HepG2 (cell line): ENCODE measurements at regions of chr6 and their contacts with region 1.

Region 1: DNA sequence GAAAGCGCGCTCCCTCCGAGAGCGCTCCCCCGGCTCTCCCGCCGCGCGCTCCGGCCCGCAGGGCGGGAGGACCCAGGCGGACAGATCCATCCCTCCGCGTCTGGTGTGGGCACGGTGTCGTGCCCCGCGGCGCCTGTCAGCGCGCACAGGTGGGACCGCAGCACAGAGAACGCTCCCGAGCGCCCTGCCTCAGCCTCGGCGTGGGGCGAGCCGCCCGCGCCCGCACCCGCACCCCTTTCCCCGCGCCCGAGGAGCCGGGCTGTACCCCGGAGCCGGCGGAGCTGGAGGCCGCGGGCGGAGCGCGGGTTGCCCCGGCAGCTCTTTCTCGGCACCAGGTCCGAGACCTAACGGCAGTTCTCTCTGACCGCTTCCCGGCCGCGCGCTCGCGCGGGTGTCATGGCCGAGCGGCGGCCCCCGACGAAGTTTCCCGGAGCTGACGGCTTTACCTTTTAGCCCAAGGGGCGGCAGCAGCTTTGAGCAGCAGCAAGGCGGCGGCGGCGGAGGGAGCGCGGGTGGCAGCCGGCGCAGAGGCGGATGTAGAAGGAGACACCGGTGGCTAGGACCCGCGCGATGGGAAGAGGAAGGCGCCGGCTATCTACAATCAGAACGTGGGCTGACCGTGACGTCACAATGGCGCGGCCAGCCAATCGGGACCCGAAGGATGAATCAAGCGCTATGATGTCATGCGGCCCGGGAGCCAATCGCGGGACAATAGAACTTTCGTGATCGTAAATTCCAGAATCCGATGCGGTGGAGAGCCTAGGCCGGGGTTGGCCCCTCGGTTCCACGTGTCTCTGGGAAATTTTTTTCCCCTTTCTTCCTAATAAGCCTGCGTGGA is at the start of gene ELOVL5:
- DNase-seq: peak; percentile 81
- ATAC-seq: peak; percentile 84
- H3K4me3 ChIP-seq: peak within 1 kb of the TSS; percentile 69 to 91 (median 91)
- H3K27ac ChIP-seq: peak within 1 kb of the TSS; percentile 66
- H3K4me1 ChIP-seq: peaks cover 23% of the 10 kb centered on the region
- H3K27me3 ChIP-seq: peaks cover 0 to 29% of the 10 kb centered on the region in 2 experiments; a peak in 4 of 5 replicates
- CTCF ChIP-seq: no peak; the same call in 1 of the 2 replicates
- EP300 ChIP-seq: no peak
- POLR2A ChIP-seq: peak; percentile 7 to 60; a peak in 1 of 4 replicates
- RAD21 ChIP-seq: no peak; the same call in none of the 2 replicates
- total RNA-seq, gene ELOVL5: 43.9 and 72.4 TPM in 2 replicates

Region 2: GRCh38 chr6:53309059-53309900 is 39.3 kb before region 1 on chr6:
- CTCF ChIA-PET with region 1: no interaction called
- POLR2A ChIA-PET with region 1: no interaction called
- in situ Hi-C with region 1: no loop called
- intact Hi-C with region 1: loop called (anchors 2 kb)
- DNase-seq: peak; percentile 56
- ATAC-seq: peak; percentile 60
- H3K4me3 ChIP-seq: no peak overlapping the region
- H3K27ac ChIP-seq: no peak overlapping the region
- H3K4me1 ChIP-seq: peaks cover 48% of the 10 kb centered on the region
- H3K27me3 ChIP-seq: no peaks in the 10 kb centered on the region
- CTCF ChIP-seq: no peak
- EP300 ChIP-seq: no peak
- POLR2A ChIP-seq: no peak
- RAD21 ChIP-seq: no peak

Region 3: DNA sequence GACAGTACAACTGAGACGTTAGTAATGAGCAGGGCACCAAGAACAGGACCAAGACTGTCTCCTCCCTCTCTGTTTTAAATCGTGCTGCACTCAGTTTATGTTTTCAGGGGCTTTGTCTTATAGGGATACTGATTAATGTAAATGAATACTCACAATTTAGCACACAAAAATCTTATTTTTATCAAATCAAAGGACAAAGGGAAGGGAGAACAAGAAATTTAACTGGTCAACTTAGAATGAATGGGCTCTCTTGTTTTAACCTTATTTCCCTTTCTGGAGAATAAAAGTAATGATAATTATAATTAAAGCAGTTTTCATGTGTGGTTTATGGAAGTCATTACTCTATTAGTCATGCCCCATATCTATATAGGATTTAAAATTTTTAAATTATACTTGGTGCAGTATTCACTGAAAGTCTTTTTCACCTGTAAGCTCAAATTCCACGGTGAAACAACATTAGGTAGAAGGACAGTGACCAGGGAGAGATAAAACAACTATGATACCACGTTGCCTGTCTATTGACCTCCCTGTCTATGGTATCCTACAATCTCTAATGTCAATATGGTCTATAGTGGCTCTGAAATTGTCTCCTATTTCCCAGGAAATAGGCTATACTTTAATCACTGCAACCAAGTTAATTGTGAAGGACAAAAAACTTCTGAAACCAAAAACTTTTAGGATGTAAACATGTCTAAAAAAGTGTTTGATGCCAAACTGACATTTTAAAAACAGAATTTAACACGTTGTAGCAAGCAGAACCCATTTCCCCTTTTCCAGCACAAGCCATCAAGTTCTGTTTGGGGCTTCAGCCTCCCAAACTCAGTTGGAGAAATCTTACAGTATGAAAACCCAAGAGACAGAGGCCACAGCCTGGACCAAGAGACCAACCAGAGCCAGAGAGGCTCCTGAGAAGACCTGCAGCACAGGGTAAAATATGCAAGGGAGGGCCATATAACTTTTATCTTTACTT is 14.9 kb before region 1 on chr6:
- CTCF ChIA-PET with region 1: no interaction called
- POLR2A ChIA-PET with region 1: no interaction called
- in situ Hi-C with region 1: no loop called
- intact Hi-C with region 1: loop called (anchors 2 kb)
- DNase-seq: peak; percentile 56
- ATAC-seq: peak; percentile 93
- H3K4me3 ChIP-seq: no peak overlapping the region
- H3K27ac ChIP-seq: peak overlapping the region; percentile 15
- H3K4me1 ChIP-seq: peaks cover 51% of the 10 kb centered on the region
- H3K27me3 ChIP-seq: no peaks in the 10 kb centered on the region
- CTCF ChIP-seq: no peak
- EP300 ChIP-seq: no peak
- POLR2A ChIP-seq: no peak
- RAD21 ChIP-seq: no peak

Region 4: GRCh38 chr6:53359072-53359842 is 10.7 kb after region 1 on chr6:
- CTCF ChIA-PET with region 1: no interaction called
- POLR2A ChIA-PET with region 1: interaction called, 11 read pairs
- in situ Hi-C with region 1: no loop called
- intact Hi-C with region 1: loop called (anchors 1 kb)
- DNase-seq: peak; percentile 92
- ATAC-seq: peak; percentile 96
- H3K4me3 ChIP-seq: peak overlapping the region; percentile 58 to 82 (median 67)
- H3K27ac ChIP-seq: peak overlapping the region; percentile 82
- H3K4me1 ChIP-seq: peaks cover 42% of the 10 kb centered on the region
- H3K27me3 ChIP-seq: peaks cover 0 to 16% of the 10 kb centered on the region in 2 experiments; a peak in 3 of 5 replicates
- CTCF ChIP-seq: peak; percentile 29
- EP300 ChIP-seq: peak; percentile 74 to 82
- POLR2A ChIP-seq: peak; percentile 67 to 94
- RAD21 ChIP-seq: peak; percentile 33; the same call in 1 of the 2 replicates

Region 5: GRCh38 chr6:53410508-53411258 is 62.1 kb after region 1 on chr6:
- CTCF ChIA-PET with region 1: no interaction called
- POLR2A ChIA-PET with region 1: no interaction called
- in situ Hi-C with region 1: no loop called
- intact Hi-C with region 1: loop called (anchors 2 kb)
- DNase-seq: peak; percentile 56
- ATAC-seq: peak; percentile 100
- H3K4me3 ChIP-seq: no peak overlapping the region
- H3K27ac ChIP-seq: no peak overlapping the region
- H3K4me1 ChIP-seq: peaks cover 4% of the 10 kb centered on the region; the same call in 1 of the 2 replicates
- H3K27me3 ChIP-seq: peaks cover 0 to 4% of the 10 kb centered on the region in 2 experiments; a peak in 1 of 5 replicates
- CTCF ChIP-seq: peak; percentile 96
- EP300 ChIP-seq: no peak
- POLR2A ChIP-seq: no peak
- RAD21 ChIP-seq: peak; percentile 94